ENCODE measurements at regions of chrX and their contacts with region 1.

Region 1: DNA sequence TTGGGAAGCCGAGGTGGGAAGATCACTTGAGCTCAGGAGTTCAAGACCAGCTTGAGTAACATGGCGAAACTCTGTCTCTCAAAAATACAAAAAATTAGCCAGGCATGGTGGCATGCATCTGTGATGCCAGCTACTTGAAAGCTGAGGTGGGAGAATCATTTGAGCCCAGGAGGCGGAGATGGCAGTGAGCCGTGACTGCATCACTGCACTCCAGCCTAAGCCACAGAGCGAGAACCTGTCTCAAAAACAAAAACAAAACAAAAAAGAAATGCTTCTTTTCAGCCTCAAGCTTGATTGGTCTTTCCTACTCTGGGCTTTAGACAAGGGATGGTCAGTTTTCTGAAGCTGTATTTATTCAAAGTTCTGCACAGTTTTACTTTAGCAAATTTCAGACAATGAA is 15.8 kb upstream of the DHRSX start:
- DNase-seq: peak; percentile 91
- H3K4me3 ChIP-seq: peak overlapping the region; percentile 52
- H3K27ac ChIP-seq: peak overlapping the region; percentile 98
- H3K4me1 ChIP-seq: peaks cover 86% of the 10 kb centered on the region
- CTCF ChIP-seq: no peak

Region 2: GRCh38 chrX:1657367-1658070 is 859.1 kb before region 1 on chrX:
- CTCF ChIA-PET with region 1: no interaction called
- POLR2A ChIA-PET with region 1: no interaction called
- intact Hi-C with region 1: loop called (anchors 1 kb)
- DNase-seq: peak; percentile 66
- H3K4me3 ChIP-seq: peak overlapping the region; percentile 70
- H3K27ac ChIP-seq: peak overlapping the region; percentile 59
- H3K4me1 ChIP-seq: peaks cover 29% of the 10 kb centered on the region
- CTCF ChIP-seq: 0 out of 2 replicates have a peak, but pooled peaks have one; percentile 33

Region 3: GRCh38 chrX:2176733-2177132 is 339.9 kb before region 1 on chrX:
- CTCF ChIA-PET with region 1: no interaction called
- POLR2A ChIA-PET with region 1: no interaction called
- intact Hi-C with region 1: loop called (anchors 5 kb)
- DNase-seq: no peak
- H3K4me3 ChIP-seq: no peak overlapping the region
- H3K27ac ChIP-seq: no peak overlapping the region
- H3K4me1 ChIP-seq: peaks cover 47% of the 10 kb centered on the region
- CTCF ChIP-seq: no peak

Region 4: GRCh38 chrX:2385224-2385623 is 131.4 kb before region 1 on chrX:
- CTCF ChIA-PET with region 1: no interaction called
- POLR2A ChIA-PET with region 1: no interaction called
- intact Hi-C with region 1: no loop called
- DNase-seq: no peak
- H3K4me3 ChIP-seq: no peak overlapping the region
- H3K27ac ChIP-seq: no peak overlapping the region
- H3K4me1 ChIP-seq: no peaks in the 10 kb centered on the region
- CTCF ChIP-seq: no peak

Region 5: GRCh38 chrX:2500267-2501075 is 16.2 kb before region 1 on chrX and contains the starts of genes DHRSX and ZBED1:
- CTCF ChIA-PET with region 1: no interaction called
- POLR2A ChIA-PET with region 1: no interaction called
- intact Hi-C with region 1: loop called (anchors 1 kb)
- DNase-seq: peak; percentile 69
- H3K4me3 ChIP-seq: peak within 1 kb of the TSS; percentile 86
- H3K27ac ChIP-seq: peak within 1 kb of the TSS; percentile 71
- H3K4me1 ChIP-seq: peaks cover 60% of the 10 kb centered on the region
- CTCF ChIP-seq: peak; percentile 66
- total RNA-seq, gene DHRSX: 30.9 and 33.8 TPM in 2 replicates
- total RNA-seq, gene ZBED1: 51.1 and 58.7 TPM in 2 replicates

Region 6: GRCh38 chrX:2577844-2578506 is 61.3 kb after region 1 on chrX:
- CTCF ChIA-PET with region 1: no interaction called
- POLR2A ChIA-PET with region 1: no interaction called
- intact Hi-C with region 1: loop called (anchors 2 kb)
- DNase-seq: no peak
- H3K4me3 ChIP-seq: no peak overlapping the region
- H3K27ac ChIP-seq: no peak overlapping the region
- H3K4me1 ChIP-seq: peaks cover 22% of the 10 kb centered on the region
- CTCF ChIP-seq: no peak

Region 7: GRCh38 chrX:2595258-2595657 is 78.6 kb after region 1 on chrX:
- CTCF ChIA-PET with region 1: no interaction called
- POLR2A ChIA-PET with region 1: no interaction called
- intact Hi-C with region 1: loop called (anchors 2 kb)
- DNase-seq: no peak
- H3K4me3 ChIP-seq: no peak overlapping the region
- H3K27ac ChIP-seq: no peak overlapping the region
- H3K4me1 ChIP-seq: peaks cover 17% of the 10 kb centered on the region
- CTCF ChIP-seq: no peak

Region 8: DNA sequence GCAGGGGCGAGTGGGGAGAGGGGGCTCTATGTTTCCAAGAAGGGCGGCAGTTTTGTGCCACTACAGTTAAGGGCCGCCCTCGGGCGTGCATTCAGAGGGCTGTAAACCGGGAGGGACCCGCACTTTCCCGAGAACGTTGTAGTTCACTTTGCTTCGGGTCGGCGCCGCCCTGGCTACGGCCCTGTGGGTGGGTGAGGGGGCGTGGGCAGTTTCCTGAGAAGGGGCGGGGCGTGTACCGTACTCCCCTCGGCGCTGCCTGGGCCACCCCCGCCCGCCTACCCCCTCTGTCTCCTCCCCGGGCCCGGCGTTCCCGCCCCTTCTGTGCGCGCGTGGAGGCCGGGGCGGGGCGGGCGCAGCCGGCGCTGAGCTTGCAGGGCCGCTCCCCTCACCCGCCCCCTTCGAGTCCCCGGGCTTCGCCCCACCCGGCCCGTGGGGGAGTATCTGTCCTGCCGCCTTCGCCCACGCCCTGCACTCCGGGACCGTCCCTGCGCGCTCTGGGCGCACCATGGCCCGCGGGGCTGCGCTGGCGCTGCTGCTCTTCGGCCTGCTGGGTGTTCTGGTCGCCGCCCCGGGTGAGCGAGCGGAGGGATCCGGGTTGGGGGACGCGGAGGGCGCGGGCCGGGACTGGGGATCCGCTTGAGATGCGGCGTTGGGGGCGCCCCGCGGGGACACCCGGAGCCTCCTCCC is 174.4 kb after region 1 on chrX and contains the start of gene CD99:
- CTCF ChIA-PET with region 1: no interaction called
- POLR2A ChIA-PET with region 1: no interaction called
- intact Hi-C with region 1: loop called (anchors 10 kb)
- DNase-seq: peak; percentile 85
- H3K4me3 ChIP-seq: peak within 1 kb of the TSS; percentile 77
- H3K27ac ChIP-seq: peak within 1 kb of the TSS; percentile 44
- H3K4me1 ChIP-seq: peaks cover 34% of the 10 kb centered on the region
- CTCF ChIP-seq: no peak
- total RNA-seq, gene CD99: 80.7 and 92.3 TPM in 2 replicates

Measured in OCI-LY7 (cell line).